IMR-90 (cell line): ENCODE measurements at regions of chr11 and their contacts with region 1.

Region 1: GRCh38 chr11:119481021-119481666 is 58.2 kb upstream of the THY1 start:
- DNase-seq: peak; percentile 93
- ATAC-seq: peak; percentile 96
- H3K4me3 ChIP-seq: no peak overlapping the region
- H3K27ac ChIP-seq: no peak overlapping the region
- H3K4me1 ChIP-seq: no peaks in the 10 kb centered on the region
- H3K27me3 ChIP-seq: peaks cover 47% of the 10 kb centered on the region
- CTCF ChIP-seq: peak; percentile 98
- POLR2A ChIP-seq: no peak
- RAD21 ChIP-seq: peak; percentile 94

Region 2: DNA sequence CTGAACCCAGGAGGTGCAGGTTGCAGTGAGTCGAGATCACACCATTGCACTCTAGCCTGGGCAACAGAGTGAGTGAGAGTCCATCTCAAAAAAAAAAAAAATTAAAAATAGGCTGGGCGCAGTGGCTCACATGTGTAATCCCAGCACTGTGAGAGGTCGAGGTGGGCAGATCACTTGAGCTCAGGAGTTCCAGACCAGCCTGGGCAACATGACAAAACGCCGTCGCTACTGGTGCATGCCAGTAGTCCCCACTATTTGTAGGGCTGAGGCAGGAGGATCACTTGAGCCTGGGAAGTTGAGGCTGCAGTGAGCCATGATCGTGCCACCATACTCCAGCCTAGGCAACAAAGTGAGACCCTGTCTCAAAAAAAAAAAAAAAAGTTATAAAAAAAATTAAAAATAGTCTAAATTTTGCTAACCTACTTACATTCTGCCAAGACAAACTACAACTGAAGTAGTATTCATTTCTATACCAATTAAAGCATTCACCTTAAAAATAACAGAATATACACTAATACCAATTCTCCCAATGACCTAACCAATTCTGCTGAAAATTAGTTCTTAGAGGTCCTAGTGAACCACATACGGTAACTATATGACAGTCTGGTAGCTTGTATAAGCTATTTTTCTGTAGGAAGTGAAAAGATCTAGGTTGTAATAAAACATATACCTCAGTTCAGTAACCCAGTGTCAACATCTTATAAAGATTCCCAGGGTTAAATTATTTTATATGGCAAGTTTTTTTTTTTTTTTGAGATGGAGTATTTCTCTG is 697.2 kb before region 1 on chr11:
- CTCF ChIA-PET with region 1: no interaction called
- POLR2A ChIA-PET with region 1: no interaction called
- dilution Hi-C with region 1: no loop called
- in situ Hi-C with region 1: no loop called
- intact Hi-C with region 1: no loop called
- DNase-seq: no peak
- ATAC-seq: no peak
- H3K4me3 ChIP-seq: no peak overlapping the region
- H3K27ac ChIP-seq: no peak overlapping the region
- H3K4me1 ChIP-seq: peaks cover 3% of the 10 kb centered on the region
- H3K27me3 ChIP-seq: no peaks in the 10 kb centered on the region
- CTCF ChIP-seq: no peak
- POLR2A ChIP-seq: no peak
- RAD21 ChIP-seq: no peak

Region 3: DNA sequence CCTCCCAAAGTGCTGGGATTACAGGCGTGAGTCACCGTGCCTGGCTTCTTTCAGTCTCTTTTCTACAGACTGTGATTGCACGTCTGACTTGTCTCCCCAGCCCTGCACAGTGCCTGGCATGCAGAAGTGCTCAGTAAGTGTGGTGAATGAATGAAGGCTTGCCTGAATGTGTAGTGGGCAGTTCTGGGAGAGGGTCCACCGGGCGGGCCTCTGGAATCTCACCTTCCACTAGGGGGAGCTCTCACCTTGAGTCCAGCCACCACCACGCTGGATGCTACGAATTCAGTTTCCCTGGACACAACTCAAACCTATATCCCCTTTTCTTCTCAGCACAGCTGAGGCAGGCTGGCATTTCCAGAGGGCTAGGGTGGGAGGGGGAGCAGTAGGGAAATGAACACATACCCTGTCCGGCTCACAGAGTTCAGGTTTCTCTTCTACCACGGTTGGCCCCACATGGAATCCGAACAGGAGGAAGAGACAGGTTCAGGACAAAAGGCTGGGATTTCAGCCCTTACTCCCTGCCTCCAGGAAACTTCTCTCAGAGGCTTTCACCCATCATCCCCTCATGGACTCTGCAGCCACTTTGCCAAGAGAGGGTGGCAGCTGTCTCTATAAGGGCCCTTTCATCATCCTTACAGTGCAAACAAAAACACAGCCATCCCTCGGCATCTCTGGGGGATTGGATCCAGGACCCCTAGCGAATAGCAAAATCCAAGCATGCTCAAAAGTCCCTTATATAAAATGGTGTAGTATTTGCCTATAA is 161.0 kb after region 1 on chr11:
- CTCF ChIA-PET with region 1: no interaction called
- POLR2A ChIA-PET with region 1: no interaction called
- dilution Hi-C with region 1: no loop called
- in situ Hi-C with region 1: no loop called
- intact Hi-C with region 1: loop called (anchors 5 kb)
- DNase-seq: peak; percentile 5
- ATAC-seq: peak; percentile 46; the same call in 1 of the 2 replicates
- H3K4me3 ChIP-seq: no peak overlapping the region
- H3K27ac ChIP-seq: no peak overlapping the region
- H3K4me1 ChIP-seq: no peaks in the 10 kb centered on the region
- H3K27me3 ChIP-seq: peaks cover 42% of the 10 kb centered on the region
- CTCF ChIP-seq: peak; percentile 38
- POLR2A ChIP-seq: no peak
- RAD21 ChIP-seq: peak; percentile 39

Region 4: GRCh38 chr11:119728651-119729580 is 247.8 kb after region 1 on chr11 and contains the start of gene NECTIN1:
- CTCF ChIA-PET with region 1: interaction called, 5 read pairs
- POLR2A ChIA-PET with region 1: no interaction called
- dilution Hi-C with region 1: no loop called
- in situ Hi-C with region 1: loop called (anchors 5 kb)
- intact Hi-C with region 1: loop called (anchors 2 kb)
- DNase-seq: peak; percentile 79
- ATAC-seq: peak; percentile 92
- H3K4me3 ChIP-seq: peak within 1 kb of the TSS; percentile 72
- H3K27ac ChIP-seq: peak within 1 kb of the TSS; percentile 65
- H3K4me1 ChIP-seq: peaks cover 4% of the 10 kb centered on the region; the same call in 1 of the 2 replicates
- H3K27me3 ChIP-seq: peaks cover 16% of the 10 kb centered on the region
- CTCF ChIP-seq: peak; percentile 78
- POLR2A ChIP-seq: peak; percentile 57; the same call in 1 of the 2 replicates
- RAD21 ChIP-seq: peak; percentile 68
- total RNA-seq, gene NECTIN1: 1.7 and 2.3 TPM in 2 replicates

Region 5: GRCh38 chr11:120013325-120014270 is 532.5 kb after region 1 on chr11:
- CTCF ChIA-PET with region 1: no interaction called
- POLR2A ChIA-PET with region 1: no interaction called
- dilution Hi-C with region 1: no loop called
- in situ Hi-C with region 1: no loop called
- intact Hi-C with region 1: loop called (anchors 1 kb)
- DNase-seq: peak; percentile 10
- ATAC-seq: peak; percentile 57
- H3K4me3 ChIP-seq: no peak overlapping the region
- H3K27ac ChIP-seq: no peak overlapping the region
- H3K4me1 ChIP-seq: no peaks in the 10 kb centered on the region
- H3K27me3 ChIP-seq: peaks cover 38% of the 10 kb centered on the region
- CTCF ChIP-seq: peak; percentile 53
- POLR2A ChIP-seq: no peak
- RAD21 ChIP-seq: peak; percentile 47

Region 6: DNA sequence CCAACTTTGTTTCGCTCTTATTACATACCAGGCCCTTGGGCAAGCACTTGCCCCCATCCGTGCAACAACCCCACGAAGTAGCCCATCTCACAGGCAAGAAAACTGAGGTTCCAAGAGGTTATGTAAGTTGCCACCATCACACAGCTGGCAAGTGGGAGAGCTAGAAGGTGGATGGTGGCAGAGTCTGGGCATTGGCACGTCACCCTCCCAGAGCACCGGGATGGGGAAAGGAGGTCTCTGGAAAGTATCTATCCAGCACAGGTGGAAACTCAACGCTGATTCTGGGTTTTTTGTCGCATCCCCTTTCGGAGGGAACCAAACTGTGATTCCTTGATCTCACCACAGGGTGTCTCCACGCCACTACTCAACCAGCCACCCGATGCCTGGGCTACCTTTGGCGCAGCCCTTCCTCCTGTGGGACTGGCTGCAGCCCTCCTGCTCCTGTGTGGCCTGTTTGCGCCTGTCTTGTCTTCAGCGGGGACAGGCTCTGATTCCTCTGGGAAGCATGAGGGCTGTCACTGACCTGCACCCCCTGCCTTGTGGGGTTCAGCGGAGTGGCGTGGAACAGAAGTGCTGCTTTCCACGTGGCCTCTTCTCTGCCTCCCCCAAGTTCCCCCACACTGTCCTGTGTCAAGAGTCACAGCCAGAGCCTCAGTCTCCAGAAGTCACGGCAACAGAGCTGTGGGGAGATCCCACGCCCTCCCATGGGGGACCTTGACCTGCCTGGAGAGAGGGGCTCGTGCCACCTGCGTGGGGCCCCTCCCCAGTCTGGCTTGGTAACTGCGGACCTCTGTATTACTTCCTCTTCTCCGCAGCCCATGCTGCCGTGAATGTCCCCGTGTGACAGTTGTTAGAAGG is 691.1 kb after region 1 on chr11:
- CTCF ChIA-PET with region 1: no interaction called
- POLR2A ChIA-PET with region 1: no interaction called
- dilution Hi-C with region 1: no loop called
- in situ Hi-C with region 1: no loop called
- intact Hi-C with region 1: loop called (anchors 1 kb)
- DNase-seq: peak; percentile 60
- ATAC-seq: peak; percentile 73
- H3K4me3 ChIP-seq: no peak overlapping the region
- H3K27ac ChIP-seq: no peak overlapping the region
- H3K4me1 ChIP-seq: no peaks in the 10 kb centered on the region; the same call in 1 of the 2 replicates
- H3K27me3 ChIP-seq: peaks cover 56% of the 10 kb centered on the region
- CTCF ChIP-seq: peak; percentile 94
- POLR2A ChIP-seq: peak; percentile 60; the same call in 1 of the 2 replicates
- RAD21 ChIP-seq: peak; percentile 97